Posterior vena cava (tissue), 2 donors: ENCODE measurements at regions of chr17 and their contacts with region 1.

Region 1: GRCh38 chr17:48892940-48893645 is 506 bp downstream of the ATP5MC1 start:
- DNase-seq: peak; percentile 66

Region 2: DNA sequence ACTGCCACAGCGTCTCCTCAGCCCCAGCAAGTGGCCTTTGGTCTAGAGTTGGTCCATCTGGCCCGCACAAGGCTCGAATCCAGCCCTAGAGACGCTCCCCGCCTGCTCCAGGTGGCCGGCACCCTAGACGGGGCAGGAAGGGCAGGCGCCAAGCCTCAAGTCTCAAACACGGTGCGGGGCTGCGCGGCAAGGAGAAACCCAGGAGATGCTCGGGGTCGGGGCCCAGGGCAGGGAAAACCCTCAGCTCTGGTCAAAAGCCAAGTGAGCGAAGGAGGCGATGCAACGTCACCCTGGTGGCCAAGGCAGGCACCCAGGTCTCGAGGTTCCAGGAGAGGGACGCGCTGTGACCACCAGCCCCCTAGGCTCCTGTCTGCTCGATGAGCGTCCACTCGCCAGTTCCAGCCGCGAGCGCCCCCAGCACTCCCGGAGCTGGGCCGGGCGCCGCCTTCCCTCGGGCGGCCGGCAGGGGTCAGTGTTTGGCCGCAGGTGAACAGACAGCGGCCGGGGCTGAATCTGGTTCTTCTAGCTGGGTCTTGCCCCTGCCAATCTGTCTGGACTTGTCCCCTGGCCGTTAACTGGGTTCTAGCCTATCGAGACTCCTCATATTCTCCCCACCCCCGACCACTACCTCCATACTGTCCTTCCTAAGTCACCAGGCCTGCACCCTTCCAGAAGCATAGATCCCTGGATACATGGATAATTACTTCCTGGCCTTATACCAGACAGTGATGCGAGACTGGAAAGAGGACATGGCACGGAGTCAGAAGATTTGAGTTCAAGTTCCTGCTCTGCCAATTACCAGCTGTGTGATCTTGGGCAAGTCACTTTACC is 214.7 kb before region 1 on chr17:
- intact Hi-C with region 1: loop called in 1 of 2 experiments (anchors 5 kb)
- DNase-seq: peak; percentile 87

Region 3: GRCh38 chr17:49191917-49192741 is 299.0 kb after region 1 on chr17:
- intact Hi-C with region 1: loop called in 1 of 2 experiments (anchors 5 kb)
- DNase-seq: peak; percentile 97